ENCODE measurements at regions of chr7 and their contacts with region 1.

Region 1: DNA sequence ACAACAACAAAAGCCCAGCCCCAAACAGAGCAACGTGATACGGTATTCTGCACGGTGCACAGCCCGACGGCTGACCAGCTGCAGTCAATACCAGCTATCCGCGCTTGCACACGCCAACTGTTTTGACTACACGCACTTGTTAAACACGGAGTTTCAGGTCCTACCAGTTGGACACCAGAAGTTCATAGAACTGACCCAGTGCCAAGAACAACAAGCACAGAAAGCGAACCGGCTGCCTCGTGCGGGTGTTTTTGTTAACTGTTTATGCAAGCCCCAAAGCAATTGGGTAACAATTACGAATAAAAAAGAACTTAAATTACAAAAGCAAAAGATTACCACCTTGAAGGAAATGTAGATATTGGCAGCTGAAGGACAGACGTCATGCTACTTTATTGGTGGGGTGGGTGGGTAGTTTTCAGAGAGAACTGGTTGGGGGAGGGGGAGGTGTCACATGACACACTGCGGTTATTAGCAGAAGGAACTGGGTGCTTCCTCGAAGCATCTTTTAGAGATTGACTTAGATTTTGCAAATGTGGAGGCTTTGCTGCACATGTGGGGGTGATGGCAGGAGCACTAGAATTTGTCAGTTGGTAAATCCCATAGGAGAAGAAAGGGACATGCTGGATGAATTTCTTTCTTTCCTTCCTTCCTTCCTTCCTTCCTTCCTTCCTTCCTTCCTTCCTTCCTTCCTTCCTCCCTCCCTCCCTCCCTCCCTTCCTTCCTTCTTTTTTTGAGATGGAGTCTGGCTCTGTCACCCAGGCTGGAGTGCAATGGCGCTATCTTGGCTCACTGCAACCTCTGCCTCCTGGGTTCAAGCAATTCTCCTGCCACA is 110.7 kb upstream of the EFCAB10 start:
- DNase-seq: peak; percentile 23
- ATAC-seq: no peak
- H3K4me3 Mint-ChIP-seq: peak overlapping the region; percentile 74
- H3K27ac Mint-ChIP-seq: peak overlapping the region; percentile 99
- H3K4me1 Mint-ChIP-seq: peaks cover 89% of the 10 kb centered on the region
- H3K27me3 Mint-ChIP-seq: no peaks in the 10 kb centered on the region
- CTCF ChIP-seq: no peak

Region 2: DNA sequence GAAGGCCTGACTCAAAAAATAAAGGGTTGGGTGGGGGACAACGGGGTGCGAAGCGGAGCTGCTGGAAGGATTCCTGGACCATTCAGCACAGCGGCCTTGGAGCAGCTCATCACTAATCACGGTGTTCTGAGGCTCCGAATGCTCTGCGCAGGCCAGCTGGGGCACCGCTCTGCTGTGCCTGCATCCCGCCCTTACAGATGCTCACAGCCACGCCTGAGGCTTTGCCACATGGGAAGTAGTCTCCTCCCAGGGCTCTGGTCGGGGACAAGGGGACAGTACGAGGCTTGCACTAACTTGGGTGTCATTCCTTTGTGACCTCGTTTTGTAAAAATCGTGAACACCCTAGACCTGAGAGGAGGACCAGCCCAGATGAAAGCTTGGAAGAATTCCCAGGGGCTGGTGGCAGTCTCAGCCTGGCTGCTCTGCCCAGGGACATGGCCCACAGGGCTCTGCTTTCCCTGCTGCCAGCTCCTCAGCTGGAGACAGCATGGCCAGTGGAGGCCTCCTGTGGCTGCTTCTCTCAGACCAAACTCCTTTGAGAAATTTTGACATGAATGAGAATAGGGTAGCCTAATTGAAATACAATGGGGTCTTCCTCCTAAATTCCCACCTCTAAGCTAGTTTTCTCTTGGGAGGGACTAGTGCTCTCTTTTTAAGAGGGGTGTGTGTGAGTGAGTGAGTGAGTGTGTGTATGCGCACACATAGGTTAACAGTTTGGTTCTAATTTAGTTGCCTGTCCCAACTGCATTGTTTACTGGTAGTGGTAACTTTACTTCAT is 29.6 kb after region 1 on chr7:
- CTCF ChIA-PET with region 1: interaction called, 12 read pairs
- POLR2A ChIA-PET with region 1: interaction called, 3 read pairs
- DNase-seq: no peak
- ATAC-seq: peak; percentile 53
- H3K4me3 Mint-ChIP-seq: no peak overlapping the region
- H3K27ac Mint-ChIP-seq: peak overlapping the region; percentile 86; the same call in 1 of the 2 replicates
- H3K4me1 Mint-ChIP-seq: peaks cover 65% of the 10 kb centered on the region
- H3K27me3 Mint-ChIP-seq: no peaks in the 10 kb centered on the region
- CTCF ChIP-seq: no peak

Region 3: DNA sequence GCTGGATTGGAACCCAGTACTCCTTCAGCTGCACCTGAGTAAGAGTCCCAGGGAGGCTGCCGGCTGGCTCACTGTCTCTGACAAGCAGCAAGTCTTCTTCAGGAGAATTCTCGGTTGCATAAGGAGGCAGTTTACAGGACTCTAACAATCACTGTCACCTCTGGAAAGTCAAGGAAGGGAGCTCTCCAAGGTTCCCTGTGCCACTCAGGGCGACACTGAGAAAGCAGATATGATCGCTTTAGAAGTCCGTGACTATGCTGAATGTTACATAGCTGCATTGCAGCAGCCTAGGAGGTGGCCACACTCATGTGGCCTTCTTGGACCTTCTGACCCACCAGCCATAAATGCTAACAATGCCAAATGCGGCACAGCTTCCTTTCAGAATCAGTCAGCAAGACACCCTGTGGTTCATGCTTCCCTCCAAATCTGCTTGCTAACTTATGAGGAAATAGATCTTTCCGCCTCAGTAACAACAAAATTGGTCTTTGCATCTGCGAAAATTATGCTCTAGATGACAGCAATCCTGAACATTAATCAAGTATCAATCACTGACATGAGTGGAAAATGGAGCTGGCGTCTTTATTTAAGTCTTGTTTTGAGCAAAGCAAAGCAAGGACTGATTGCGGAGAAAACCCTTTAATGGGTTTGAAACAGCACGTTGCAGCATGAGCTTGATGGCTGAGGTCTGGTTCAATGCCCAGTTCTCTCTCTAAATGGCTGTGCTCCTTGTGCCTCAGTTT is 51.6 kb after region 1 on chr7:
- CTCF ChIA-PET with region 1: interaction called, 18 read pairs
- POLR2A ChIA-PET with region 1: no interaction called
- DNase-seq: no peak
- ATAC-seq: peak; percentile 52
- H3K4me3 Mint-ChIP-seq: no peak overlapping the region
- H3K27ac Mint-ChIP-seq: no peak overlapping the region
- H3K4me1 Mint-ChIP-seq: peaks cover 38% of the 10 kb centered on the region
- H3K27me3 Mint-ChIP-seq: no peaks in the 10 kb centered on the region
- CTCF ChIP-seq: no peak

Region 4: DNA sequence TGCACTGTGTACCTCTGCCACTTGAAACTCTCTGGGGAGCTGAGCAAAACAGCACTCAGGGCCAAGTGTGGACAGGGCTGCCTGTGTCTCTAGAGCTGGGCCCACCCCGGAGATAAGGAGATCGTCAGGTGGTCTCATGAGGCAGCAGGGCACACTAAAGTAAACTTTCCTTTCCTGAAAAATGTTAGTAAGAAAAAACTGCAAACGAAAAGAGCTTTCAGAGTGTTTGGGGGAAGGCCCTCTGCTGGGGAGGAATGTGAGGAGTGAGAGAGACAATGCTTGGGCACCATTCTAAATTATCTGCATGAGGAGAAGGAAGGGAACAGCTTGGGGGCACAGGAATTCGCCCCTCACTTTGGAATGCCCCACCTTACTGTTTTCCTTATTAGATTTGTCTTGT is 56.8 kb after region 1 on chr7:
- CTCF ChIA-PET with region 1: interaction called, 18 read pairs
- POLR2A ChIA-PET with region 1: no interaction called
- DNase-seq: no peak
- ATAC-seq: peak; percentile 70
- H3K4me3 Mint-ChIP-seq: no peak overlapping the region
- H3K27ac Mint-ChIP-seq: peak overlapping the region; percentile 80
- H3K4me1 Mint-ChIP-seq: peaks cover 47% of the 10 kb centered on the region
- H3K27me3 Mint-ChIP-seq: no peaks in the 10 kb centered on the region
- CTCF ChIP-seq: no peak

Region 5: GRCh38 chr7:105759670-105760550 is 68.0 kb after region 1 on chr7:
- CTCF ChIA-PET with region 1: interaction called, 24 read pairs
- POLR2A ChIA-PET with region 1: no interaction called
- DNase-seq: peak; percentile 38
- ATAC-seq: no peak; the same call in 1 of the 2 replicates
- H3K4me3 Mint-ChIP-seq: no peak overlapping the region
- H3K27ac Mint-ChIP-seq: peak overlapping the region; percentile 61
- H3K4me1 Mint-ChIP-seq: peaks cover 38% of the 10 kb centered on the region
- H3K27me3 Mint-ChIP-seq: no peaks in the 10 kb centered on the region
- CTCF ChIP-seq: no peak